GM12878 (cell line): ENCODE measurements at regions of chr19 and their contacts with region 1.

Region 1: DNA sequence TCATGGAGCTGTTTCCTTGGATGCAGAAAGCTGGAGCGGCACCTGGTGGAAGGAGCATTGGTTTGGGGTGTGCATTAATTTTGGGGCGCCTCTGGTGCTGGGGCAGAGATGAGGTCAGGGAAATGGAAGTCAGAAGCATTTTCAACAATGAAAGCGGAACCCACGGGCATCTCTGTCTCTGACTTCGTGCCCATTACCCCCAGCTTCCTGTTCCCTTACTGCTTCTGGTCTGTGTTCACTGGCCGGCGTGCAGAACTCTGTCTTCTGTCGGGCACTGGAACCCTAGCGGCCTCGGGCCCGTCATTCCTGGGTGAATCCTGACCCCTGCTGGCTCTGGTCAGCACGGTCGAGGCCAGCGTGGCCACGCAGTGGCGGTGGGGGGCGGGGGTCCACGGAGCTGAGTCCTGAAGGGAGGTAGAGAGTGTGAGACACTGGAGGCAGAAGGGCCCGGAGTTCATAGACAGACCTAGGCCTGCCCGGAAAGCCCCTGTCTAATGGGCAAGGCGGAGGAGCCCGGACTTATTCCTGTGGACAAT is 7.9 kb upstream of the LINGO3 start:
- DNase-seq: no peak
- ATAC-seq: peak; percentile 90
- H3K4me3 ChIP-seq: no peak overlapping the region
- H3K27ac ChIP-seq: no peak overlapping the region
- H3K4me1 ChIP-seq: peaks cover 3% of the 10 kb centered on the region; the same call in 1 of the 2 replicates
- H3K27me3 ChIP-seq: no peaks in the 10 kb centered on the region
- CTCF ChIP-seq: peak; percentile 43 to 61 (median 53); a peak in 4 of 6 replicates
- EP300 ChIP-seq: no peak
- POLR2A ChIP-seq: no peak
- RAD21 ChIP-seq: peak; percentile 74

Region 2: DNA sequence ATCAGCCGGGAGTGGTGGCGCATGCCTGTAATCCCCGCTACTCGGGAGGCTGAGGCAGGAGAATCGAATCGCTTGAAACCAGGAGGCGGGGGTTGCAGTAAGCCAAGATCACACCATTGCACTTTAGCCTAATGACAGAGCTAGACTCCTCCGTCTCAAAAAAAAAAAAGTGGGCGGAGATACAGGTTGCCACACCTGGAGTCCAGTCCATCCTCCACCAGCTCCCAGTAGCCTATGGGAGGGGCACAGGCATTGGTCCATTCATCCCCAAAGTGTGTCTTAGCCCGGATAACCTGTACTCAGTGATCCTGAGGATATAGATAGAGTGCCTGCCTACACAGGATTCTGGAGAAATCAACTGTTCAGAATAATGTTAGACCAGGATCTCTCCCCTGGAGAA is 155.5 kb before region 1 on chr19:
- CTCF ChIA-PET with region 1: interaction called, 9 read pairs
- POLR2A ChIA-PET with region 1: interaction called, 4 read pairs
- RAD21 ChIA-PET with region 1: interaction called, 5 read pairs
- SMC1A ChIA-PET with region 1: interaction called, 14 read pairs
- in situ Hi-C with region 1: no loop called
- intact Hi-C with region 1: loop called (anchors 2 kb)
- DNase-seq: no peak
- ATAC-seq: no peak
- H3K4me3 ChIP-seq: no peak overlapping the region
- H3K27ac ChIP-seq: no peak overlapping the region
- H3K4me1 ChIP-seq: no peaks in the 10 kb centered on the region; the same call in 1 of the 2 replicates
- H3K27me3 ChIP-seq: no peaks in the 10 kb centered on the region
- CTCF ChIP-seq: no peak
- EP300 ChIP-seq: no peak
- POLR2A ChIP-seq: no peak
- RAD21 ChIP-seq: no peak

Region 3: GRCh38 chr19:2274931-2275535 is 40.9 kb before region 1 on chr19:
- CTCF ChIA-PET with region 1: interaction called, 5 read pairs
- POLR2A ChIA-PET with region 1: no interaction called
- RAD21 ChIA-PET with region 1: no interaction called
- SMC1A ChIA-PET with region 1: interaction called, 4 read pairs
- in situ Hi-C with region 1: no loop called
- intact Hi-C with region 1: loop called (anchors 1 kb)
- DNase-seq: no peak
- ATAC-seq: no peak
- H3K4me3 ChIP-seq: no peak overlapping the region
- H3K27ac ChIP-seq: no peak overlapping the region
- H3K4me1 ChIP-seq: peaks cover 7% of the 10 kb centered on the region
- H3K27me3 ChIP-seq: no peaks in the 10 kb centered on the region
- CTCF ChIP-seq: peak; percentile 43 to 67 (median 57); a peak in 5 of 6 replicates
- EP300 ChIP-seq: no peak
- POLR2A ChIP-seq: peak; percentile 36
- RAD21 ChIP-seq: peak; percentile 70

Region 4: GRCh38 chr19:2416321-2417097 is 100.6 kb after region 1 on chr19:
- CTCF ChIA-PET with region 1: no interaction called
- POLR2A ChIA-PET with region 1: no interaction called
- RAD21 ChIA-PET with region 1: no interaction called
- SMC1A ChIA-PET with region 1: no interaction called
- in situ Hi-C with region 1: no loop called
- intact Hi-C with region 1: no loop called
- DNase-seq: no peak
- ATAC-seq: peak; percentile 73
- H3K4me3 ChIP-seq: no peak overlapping the region
- H3K27ac ChIP-seq: no peak overlapping the region
- H3K4me1 ChIP-seq: no peaks in the 10 kb centered on the region
- H3K27me3 ChIP-seq: no peaks in the 10 kb centered on the region
- CTCF ChIP-seq: no peak
- EP300 ChIP-seq: no peak
- POLR2A ChIP-seq: peak; percentile 55; the same call in 1 of the 2 replicates
- RAD21 ChIP-seq: no peak